Colonic mucosa (tissue), 4 donors: ENCODE measurements at regions of chr7 and their contacts with region 1.

Region 1: DNA sequence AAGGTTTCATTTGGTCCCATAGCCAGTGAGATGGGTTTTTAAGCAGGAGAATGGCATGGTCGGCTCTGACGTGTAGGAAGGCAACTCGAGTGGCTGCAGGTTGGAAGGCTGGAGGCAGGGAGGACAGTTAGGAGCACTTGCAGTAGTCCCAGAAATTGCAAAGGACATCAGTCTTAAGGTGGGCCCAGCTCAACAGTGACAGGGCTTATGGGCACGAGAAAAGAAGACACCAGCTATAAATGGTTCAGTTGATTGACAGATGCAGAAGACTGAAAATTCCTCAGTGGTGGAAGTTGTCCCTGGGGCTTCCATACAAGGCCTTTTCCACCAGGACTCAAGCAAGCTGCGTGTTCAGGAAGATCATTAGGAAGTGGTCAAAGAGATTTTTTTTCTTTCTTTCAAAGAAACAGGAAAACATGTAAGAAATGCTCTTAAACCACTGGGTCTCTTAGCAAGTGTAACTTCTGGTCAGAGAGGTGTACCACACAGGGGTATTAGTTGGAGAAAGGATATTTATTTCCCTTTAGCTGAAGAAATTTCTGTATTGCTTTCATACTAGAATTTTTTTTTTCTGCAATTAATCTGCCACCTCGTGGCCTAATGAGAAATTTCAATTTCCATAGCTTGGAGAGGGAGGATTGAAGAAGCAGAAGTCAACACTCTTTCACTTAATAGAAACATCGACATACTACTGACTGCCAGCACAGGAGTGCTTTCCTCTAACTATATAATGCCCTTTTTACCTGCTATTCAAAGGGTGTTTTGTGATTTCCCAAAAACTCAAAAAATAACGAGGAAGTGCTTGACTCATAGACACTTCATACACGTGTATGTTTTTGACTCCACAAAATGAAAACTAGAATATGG is 177.4 kb upstream of the NAMPT start:
- DNase-seq: no peak
- H3K4me3 ChIP-seq: no peak overlapping the region
- H3K27ac ChIP-seq: no peak overlapping the region
- H3K4me1 ChIP-seq: no peaks in the 10 kb centered on the region
- H3K27me3 ChIP-seq: no peaks in the 10 kb centered on the region
- CTCF ChIP-seq: peak; percentile 61

Region 2: GRCh38 chr7:106176414-106177299 is 285.6 kb before region 1 on chr7:
- intact Hi-C with region 1: loop called (anchors 1 kb)
- DNase-seq: peak; percentile 83
- H3K4me3 ChIP-seq: no peak overlapping the region
- H3K27ac ChIP-seq: no peak overlapping the region
- H3K4me1 ChIP-seq: no peaks in the 10 kb centered on the region
- H3K27me3 ChIP-seq: no peaks in the 10 kb centered on the region
- CTCF ChIP-seq: peak; percentile 91

Region 3: DNA sequence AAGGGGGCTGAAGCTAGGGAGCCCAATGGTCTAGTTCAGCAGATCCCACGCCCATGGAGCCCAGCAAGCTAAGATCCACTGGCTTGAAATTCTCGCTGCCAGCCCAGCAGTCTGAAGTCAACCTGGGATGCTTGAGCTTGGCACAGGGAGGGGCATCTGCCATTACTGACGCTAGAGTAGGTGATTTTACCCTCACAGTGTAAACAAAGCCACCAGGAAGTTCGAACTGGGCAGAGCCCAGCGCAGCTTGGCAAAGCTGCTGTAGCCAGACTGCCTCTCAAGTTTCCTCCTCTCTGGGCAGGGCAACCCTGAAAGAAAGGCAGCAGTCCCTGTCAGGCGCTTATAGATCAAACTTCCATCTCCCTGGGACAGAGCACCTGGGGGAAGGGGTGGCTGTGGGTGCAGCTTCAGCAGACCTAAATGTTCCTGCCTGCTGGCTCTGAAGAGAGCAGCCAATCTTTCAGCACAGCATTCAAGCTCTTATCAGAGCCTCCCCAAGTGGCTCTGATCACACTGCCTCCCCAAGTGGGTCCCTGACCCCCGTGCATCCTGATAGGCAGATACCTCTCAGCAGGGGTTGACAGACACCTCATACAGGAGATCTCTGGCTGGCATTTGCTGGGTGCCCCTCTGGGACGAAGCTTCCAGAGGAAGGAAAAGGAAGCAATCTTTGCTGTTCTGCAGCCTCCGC is 31.0 kb after region 1 on chr7:
- intact Hi-C with region 1: no loop called
- DNase-seq: peak; percentile 75
- H3K4me3 ChIP-seq: no peak overlapping the region
- H3K27ac ChIP-seq: no peak overlapping the region
- H3K4me1 ChIP-seq: no peaks in the 10 kb centered on the region
- H3K27me3 ChIP-seq: no peaks in the 10 kb centered on the region
- CTCF ChIP-seq: no peak

Region 4: GRCh38 chr7:106534271-106534846 is 72.1 kb after region 1 on chr7:
- intact Hi-C with region 1: loop called (anchors 2 kb)
- DNase-seq: no peak
- H3K4me3 ChIP-seq: no peak overlapping the region
- H3K27ac ChIP-seq: no peak overlapping the region
- H3K4me1 ChIP-seq: no peaks in the 10 kb centered on the region
- H3K27me3 ChIP-seq: no peaks in the 10 kb centered on the region
- CTCF ChIP-seq: no peak